Breast epithelium (tissue), 4 donors: ENCODE measurements at regions of chr5 and their contacts with region 1.

Region 1: DNA sequence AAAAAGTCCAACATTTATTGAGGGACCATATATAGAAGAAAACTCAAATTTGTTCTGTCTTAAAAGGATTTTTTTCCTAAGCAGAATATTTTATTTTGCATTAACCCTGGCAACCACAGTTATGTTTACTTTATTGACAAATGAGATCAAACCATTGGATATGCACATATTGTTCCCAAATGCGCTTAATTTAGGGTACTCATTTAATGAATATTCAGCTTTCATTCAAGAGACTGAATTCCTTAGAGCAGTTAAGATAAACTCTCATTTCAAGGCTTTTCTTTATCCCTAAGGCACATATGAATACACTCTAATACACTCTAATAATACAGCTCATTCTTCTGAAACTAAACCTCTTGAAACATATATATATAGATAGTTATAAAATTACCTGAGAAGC is 150.2 kb downstream of the HMHB1 start:
- DNase-seq: no peak
- H3K4me3 ChIP-seq: no peak overlapping the region
- H3K27ac ChIP-seq: no peak overlapping the region
- H3K4me1 ChIP-seq: no peaks in the 10 kb centered on the region
- H3K27me3 ChIP-seq: no peaks in the 10 kb centered on the region
- CTCF ChIP-seq: no peak
- POLR2A ChIP-seq: no peak

Region 2: GRCh38 chr5:142959683-142960657 is 1002.2 kb before region 1 on chr5:
- intact Hi-C with region 1: no loop called
- DNase-seq: no peak
- H3K4me3 ChIP-seq: no peak overlapping the region
- H3K27ac ChIP-seq: no peak overlapping the region
- H3K4me1 ChIP-seq: no peaks in the 10 kb centered on the region
- H3K27me3 ChIP-seq: no peaks in the 10 kb centered on the region
- CTCF ChIP-seq: no peak
- POLR2A ChIP-seq: no peak

Region 3: DNA sequence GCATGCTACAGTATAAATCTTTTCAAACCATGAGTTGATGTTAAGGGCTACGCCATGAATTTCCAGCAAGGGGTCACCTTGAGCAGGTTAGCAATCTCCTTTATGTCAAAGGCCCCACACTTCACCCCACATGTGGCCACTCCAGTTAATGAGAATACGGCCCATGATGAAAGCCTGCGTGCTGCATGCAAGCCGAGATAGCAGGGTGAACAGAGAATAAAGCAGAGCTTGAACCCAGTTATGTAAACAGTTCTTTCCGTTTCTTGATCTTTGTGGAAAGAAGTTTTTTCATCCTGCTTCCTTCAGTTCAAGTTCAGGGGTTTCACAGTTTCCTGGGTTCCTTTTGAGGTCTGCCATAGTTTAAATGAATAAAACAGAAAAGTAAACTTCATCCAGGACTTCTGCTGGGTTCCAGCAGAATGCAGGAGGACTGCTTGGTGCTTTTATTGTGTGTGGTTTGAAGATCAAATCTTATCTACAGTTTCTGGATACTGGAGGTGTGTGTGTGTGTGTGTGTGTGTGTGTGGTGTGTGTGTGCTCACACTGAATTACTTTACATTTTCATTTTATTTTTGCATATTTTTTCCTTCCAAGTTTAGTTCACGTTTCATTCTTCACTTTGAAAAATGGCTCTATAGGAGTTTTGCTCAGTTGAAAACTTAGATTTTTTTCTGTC is 63.1 kb before region 1 on chr5:
- intact Hi-C with region 1: no loop called
- DNase-seq: no peak
- H3K4me3 ChIP-seq: no peak overlapping the region
- H3K27ac ChIP-seq: no peak overlapping the region
- H3K4me1 ChIP-seq: no peaks in the 10 kb centered on the region
- H3K27me3 ChIP-seq: no peaks in the 10 kb centered on the region
- CTCF ChIP-seq: no peak
- POLR2A ChIP-seq: no peak

Region 4: GRCh38 chr5:143938230-143938629 is 24.0 kb before region 1 on chr5:
- intact Hi-C with region 1: loop called (anchors 2 kb)
- DNase-seq: no peak
- H3K4me3 ChIP-seq: no peak overlapping the region
- H3K27ac ChIP-seq: no peak overlapping the region
- H3K4me1 ChIP-seq: no peaks in the 10 kb centered on the region
- H3K27me3 ChIP-seq: no peaks in the 10 kb centered on the region
- CTCF ChIP-seq: no peak
- POLR2A ChIP-seq: no peak

Region 5: DNA sequence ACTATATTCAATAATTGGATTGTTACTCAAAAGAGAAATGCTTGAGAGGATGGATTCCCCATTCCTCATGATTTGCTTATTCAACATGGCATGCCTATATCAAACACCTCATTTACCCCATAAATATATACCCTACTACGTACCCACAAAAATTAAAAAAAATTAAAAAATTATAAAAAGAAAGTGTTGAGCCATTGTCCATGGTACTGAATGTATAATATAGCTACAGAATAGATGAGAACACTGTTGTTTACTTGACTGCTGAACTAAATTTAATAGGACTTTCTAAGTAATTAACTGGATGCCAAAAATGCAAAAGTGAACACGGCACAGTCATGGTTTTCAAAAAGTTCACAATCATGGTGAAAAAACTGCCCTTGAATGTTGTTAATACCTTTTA is 934.3 kb after region 1 on chr5:
- intact Hi-C with region 1: no loop called
- DNase-seq: no peak
- H3K4me3 ChIP-seq: no peak overlapping the region
- H3K27ac ChIP-seq: no peak overlapping the region
- H3K4me1 ChIP-seq: no peaks in the 10 kb centered on the region
- H3K27me3 ChIP-seq: no peaks in the 10 kb centered on the region
- CTCF ChIP-seq: no peak
- POLR2A ChIP-seq: no peak